Right cardiac atrium (tissue), 5 donors: ENCODE measurements at regions of chr10 and their contacts with region 1.

Region 1: DNA sequence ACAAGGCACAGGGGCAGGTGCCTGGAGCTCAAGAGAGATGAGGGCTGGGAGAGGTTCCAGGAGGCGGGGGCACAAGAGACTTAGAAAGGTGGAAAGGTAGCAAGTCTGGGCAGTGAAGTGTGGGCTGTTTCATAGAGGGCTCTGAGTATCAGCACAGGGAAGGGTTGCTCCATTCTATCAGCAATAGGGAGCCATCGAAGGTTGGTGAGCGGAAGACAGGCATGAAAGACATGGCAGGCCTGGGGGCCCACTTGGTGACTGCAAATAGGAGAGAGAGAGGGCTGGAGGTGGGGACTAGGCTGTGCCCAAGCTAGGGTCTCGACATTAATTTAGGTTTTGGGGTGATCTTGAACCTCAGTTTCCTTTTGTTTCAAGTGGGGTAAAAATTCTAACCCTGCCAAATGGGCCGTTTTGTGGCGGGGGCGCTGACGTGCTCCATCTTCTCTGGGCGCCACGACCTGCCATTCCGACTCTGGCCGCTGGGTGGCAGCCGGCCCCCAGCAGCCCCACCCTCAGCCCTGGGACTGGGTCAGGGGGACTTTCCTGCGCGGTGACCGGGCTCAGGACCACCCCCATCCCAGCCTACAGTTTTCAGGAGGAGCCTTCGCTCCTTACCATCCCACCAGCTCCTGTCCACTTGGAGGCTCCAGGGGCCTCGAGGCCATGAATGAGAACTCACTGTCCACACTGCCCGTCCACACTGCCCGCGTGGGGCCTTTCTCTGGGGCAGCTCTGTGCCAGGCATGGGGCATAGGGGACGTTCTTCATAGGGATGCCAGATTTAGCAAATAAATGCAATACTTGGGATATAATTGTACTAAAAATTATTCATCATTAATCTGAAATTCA is 37.2 kb upstream of the PCBD1 start:
- DNase-seq: peak; percentile 46 to 88 (median 82)
- ATAC-seq: peak; percentile 77 to 79
- H3K4me3 ChIP-seq: no peak overlapping the region
- H3K27ac ChIP-seq: no peak overlapping the region
- H3K4me1 ChIP-seq: peaks cover 4% of the 10 kb centered on the region
- H3K27me3 ChIP-seq: no peaks in the 10 kb centered on the region

Region 2: GRCh38 chr10:71068861-71069271 is 143.3 kb after region 1 on chr10:
- intact Hi-C with region 1: loop called in 1 of 4 experiments (anchors 10 kb)
- DNase-seq: peak; percentile 59 to 83 (median 76)
- ATAC-seq: peak; percentile 55 to 64
- H3K4me3 ChIP-seq: no peak overlapping the region
- H3K27ac ChIP-seq: peak overlapping the region; percentile 69
- H3K4me1 ChIP-seq: peaks cover 5% of the 10 kb centered on the region
- H3K27me3 ChIP-seq: no peaks in the 10 kb centered on the region

Region 3: DNA sequence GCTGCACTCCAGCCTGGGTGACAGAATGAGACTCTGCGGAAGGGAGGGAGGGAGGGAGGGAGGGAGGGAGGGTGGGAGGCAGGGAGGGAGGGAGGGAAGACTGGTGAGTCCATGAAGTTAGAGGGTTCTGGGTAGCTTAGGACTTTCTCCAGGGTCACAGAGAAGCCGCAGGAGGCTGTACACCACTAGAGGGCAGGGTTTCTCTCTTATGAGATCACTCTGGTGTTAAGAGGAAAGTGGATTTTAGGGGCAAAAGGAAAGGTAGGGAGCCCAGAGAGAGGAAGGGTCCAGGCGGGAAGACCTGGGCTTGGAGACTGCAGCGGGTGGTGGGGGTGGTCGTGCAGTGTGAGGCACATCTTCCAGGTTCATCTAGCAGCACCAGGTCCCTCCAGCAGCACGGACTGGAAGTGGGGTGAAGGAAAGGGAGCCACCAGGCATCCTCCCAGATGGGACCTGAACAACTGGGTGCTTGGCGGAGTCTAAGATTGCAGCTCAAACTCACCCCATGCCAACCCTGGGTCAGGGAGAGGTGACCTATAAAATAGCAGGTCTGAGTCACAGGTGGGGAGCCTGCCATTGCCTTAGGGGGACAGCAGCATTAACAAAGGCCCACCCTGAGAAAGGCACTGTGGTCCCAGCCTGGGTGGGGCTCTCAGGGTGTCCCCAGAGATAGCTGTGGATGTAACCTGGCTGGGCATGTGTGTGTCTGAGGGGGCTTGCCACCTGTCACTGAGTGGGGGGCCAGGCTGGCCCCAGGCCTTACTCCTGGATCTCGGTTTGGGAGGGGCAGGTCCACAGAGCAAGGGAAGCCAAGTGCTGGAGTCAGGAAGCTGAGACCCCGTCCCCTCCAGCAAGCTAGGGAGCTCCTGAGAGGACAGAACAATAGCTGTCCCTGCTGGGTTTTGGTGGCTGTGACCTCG is 345.0 kb after region 1 on chr10:
- intact Hi-C with region 1: loop called in 1 of 4 experiments (anchors 5 kb)
- DNase-seq: peak in 2 of 3 donors; percentile 69 to 82
- ATAC-seq: peak; percentile 23 to 39
- H3K4me3 ChIP-seq: no peak overlapping the region
- H3K27ac ChIP-seq: peak overlapping the region; percentile 61
- H3K4me1 ChIP-seq: peaks cover 12% of the 10 kb centered on the region
- H3K27me3 ChIP-seq: no peaks in the 10 kb centered on the region

Region 4: GRCh38 chr10:71285180-71285545 is 359.6 kb after region 1 on chr10:
- intact Hi-C with region 1: loop called in 3 of 4 experiments (anchors 2 to 10 kb)
- DNase-seq: peak in 2 of 3 donors; percentile 64 to 70
- ATAC-seq: peak; percentile 45 to 64
- H3K4me3 ChIP-seq: no peak overlapping the region
- H3K27ac ChIP-seq: no peak overlapping the region
- H3K4me1 ChIP-seq: no peaks in the 10 kb centered on the region
- H3K27me3 ChIP-seq: no peaks in the 10 kb centered on the region